ENCODE measurements at regions of chr15 and their contacts with region 1.

Region 1: DNA sequence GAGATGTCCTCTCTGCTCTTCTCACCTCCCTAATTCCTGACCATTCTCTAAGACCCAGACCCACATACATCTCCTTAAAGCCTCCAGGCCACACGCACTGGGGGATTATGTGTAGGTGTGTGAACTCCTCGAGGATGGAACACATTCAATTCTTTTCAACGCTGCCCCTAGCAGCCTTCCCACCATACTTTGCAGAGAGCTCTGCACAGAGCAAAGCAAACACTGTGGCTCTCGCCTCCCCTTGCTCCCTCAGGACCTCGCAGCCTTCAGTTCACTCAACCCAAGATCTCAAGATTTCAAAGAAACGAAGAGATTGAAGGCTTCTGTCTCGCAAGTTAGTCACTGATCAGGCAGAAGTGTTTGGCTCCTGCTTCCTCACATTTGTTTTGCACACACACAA is 6.0 kb downstream of the ACTC1 start:
- DNase-seq: no peak
- ATAC-seq: peak; percentile 43

Region 2: DNA sequence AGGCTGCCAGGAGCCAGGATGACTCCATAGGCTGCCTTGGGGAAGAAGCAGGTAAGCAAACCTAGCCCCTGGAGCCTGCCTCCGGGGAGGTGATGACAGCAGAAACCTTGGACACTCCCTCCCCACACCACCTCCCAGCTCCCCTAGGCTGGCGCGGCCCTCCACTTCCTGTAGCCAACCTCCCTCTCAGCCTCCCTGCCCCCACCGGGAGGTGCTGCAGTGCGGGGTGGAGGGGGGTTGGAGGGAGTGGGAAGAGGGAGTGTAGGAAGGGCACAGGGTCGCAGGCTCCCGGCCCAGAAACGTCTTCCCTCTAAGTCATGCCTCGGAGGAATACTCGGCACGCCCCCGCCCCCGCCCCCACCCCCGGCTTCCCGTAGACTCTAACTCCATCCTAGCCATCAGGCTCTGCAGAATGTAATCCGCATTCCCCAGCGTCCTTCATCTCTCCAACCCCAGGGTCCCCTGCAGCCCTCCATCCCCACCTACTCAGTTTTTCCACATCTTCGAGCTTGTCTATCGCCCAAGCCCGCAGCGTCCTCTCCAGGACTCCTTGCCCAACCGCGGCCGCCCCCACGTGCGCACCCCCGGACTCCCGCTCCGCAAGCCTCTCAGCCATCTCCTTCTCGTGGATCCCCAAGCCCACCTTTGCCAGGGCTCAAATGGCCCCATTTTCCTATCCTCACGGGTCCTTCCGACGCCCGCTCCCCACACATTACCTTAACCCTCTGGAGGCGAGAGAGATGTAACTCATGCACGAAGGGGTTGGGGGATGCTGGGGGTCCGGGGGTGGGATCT is 422.9 kb before region 1 on chr15:
- intact Hi-C with region 1: no loop called
- DNase-seq: peak; percentile 74
- ATAC-seq: peak; percentile 53

Region 3: GRCh38 chr15:34737477-34737876 is 51.8 kb before region 1 on chr15:
- intact Hi-C with region 1: loop called (anchors 5 kb)
- DNase-seq: peak; percentile 21
- ATAC-seq: peak; percentile 91

Region 4: DNA sequence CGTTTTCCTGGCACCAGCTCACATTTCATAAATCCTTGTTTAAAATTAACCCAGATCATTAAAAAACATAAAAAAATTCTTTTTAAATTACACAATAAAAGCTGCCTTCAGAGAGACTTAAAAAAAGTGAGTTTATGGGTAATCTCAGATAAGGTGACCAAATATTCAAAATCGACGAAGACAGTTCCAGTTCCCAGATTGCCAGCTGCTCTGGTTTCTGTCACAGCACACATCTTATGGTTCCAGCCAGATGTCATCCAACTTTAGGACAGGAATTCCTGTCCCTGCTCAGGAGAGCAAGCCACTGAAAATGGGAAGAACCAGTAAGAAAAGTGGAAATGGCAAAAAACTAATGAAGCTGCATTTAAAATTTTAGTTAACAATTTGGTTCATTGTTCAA is 214.6 kb after region 1 on chr15:
- intact Hi-C with region 1: no loop called
- DNase-seq: no peak
- ATAC-seq: peak; percentile 79